Activated CD4-positive, alpha-beta T cell treated with anti-CD3 and anti-CD28 coated beads, Interleukin-2, amount 10 ng/mL, durations not matched to agents 24 days and 14 days (primary cell): ENCODE measurements at regions of chr7 and their contacts with region 1.

Region 1: GRCh38 chr7:134737566-134738345 is 41.7 kb upstream of the CALD1 start:
- DNase-seq: peak; percentile 76
- H3K4me3 Mint-ChIP-seq: peak overlapping the region; percentile 26
- H3K27ac Mint-ChIP-seq: peak overlapping the region; percentile 83
- H3K4me1 Mint-ChIP-seq: peaks cover 28% of the 10 kb centered on the region
- H3K27me3 Mint-ChIP-seq: no peaks in the 10 kb centered on the region

Region 2: GRCh38 chr7:134444198-134444871 is 293.4 kb before region 1 on chr7:
- intact Hi-C with region 1: no loop called
- DNase-seq: no peak
- H3K4me3 Mint-ChIP-seq: no peak overlapping the region
- H3K27ac Mint-ChIP-seq: no peak overlapping the region
- H3K4me1 Mint-ChIP-seq: no peaks in the 10 kb centered on the region
- H3K27me3 Mint-ChIP-seq: no peaks in the 10 kb centered on the region

Region 3: GRCh38 chr7:134458806-134459698 is 278.7 kb before region 1 on chr7 and contains the start of gene AKR1B1:
- intact Hi-C with region 1: loop called (anchors 10 kb)
- DNase-seq: peak; percentile 97
- H3K4me3 Mint-ChIP-seq: peak within 1 kb of the TSS; percentile 90
- H3K27ac Mint-ChIP-seq: peak within 1 kb of the TSS; percentile 83
- H3K4me1 Mint-ChIP-seq: peaks cover 39% of the 10 kb centered on the region
- H3K27me3 Mint-ChIP-seq: no peaks in the 10 kb centered on the region
- total RNA-seq, gene AKR1B1: 107 TPM in 2 replicates

Region 4: DNA sequence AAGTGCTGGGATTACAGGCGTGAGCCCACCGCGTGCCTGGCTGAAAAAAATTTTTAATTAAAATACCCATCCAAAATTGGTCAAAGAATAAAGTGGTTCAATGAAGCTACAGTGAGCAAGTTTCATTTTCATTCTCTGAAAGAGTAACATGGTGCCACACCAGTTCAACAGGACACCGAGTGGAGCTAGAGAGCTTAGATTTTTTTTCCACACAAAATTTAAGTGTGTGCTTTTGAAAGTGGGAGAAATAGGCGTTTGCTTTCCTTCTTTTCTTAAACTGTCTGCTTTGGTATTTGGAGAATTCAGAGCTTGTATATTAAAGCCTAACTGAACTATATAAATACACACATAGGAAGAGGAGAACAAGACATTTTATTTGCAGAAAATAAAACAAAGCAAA is 47.7 kb before region 1 on chr7:
- intact Hi-C with region 1: loop called (anchors 5 kb)
- DNase-seq: peak; percentile 62
- H3K4me3 Mint-ChIP-seq: no peak overlapping the region
- H3K27ac Mint-ChIP-seq: no peak overlapping the region
- H3K4me1 Mint-ChIP-seq: peaks cover 11% of the 10 kb centered on the region
- H3K27me3 Mint-ChIP-seq: no peaks in the 10 kb centered on the region

Region 5: DNA sequence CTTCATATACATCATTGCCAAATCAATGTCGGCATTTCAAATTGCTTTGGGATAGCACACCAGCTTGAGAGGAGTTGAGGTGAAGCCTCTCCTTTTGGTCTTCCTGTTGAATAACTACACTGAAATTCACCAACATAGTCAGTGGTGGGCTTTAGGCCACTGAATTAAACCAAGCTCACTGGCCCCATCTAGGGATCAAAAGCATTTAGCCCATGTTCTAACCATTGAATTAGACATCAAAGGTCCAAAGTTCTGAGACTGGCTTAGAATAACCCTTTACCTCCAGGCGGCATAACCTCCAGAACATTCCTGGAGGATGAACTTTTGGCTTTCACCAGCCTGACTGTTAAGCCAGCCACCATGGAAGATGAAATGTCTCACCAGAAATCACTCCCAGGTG is 36.5 kb before region 1 on chr7:
- intact Hi-C with region 1: no loop called
- DNase-seq: peak; percentile 63
- H3K4me3 Mint-ChIP-seq: no peak overlapping the region
- H3K27ac Mint-ChIP-seq: no peak overlapping the region
- H3K4me1 Mint-ChIP-seq: no peaks in the 10 kb centered on the region
- H3K27me3 Mint-ChIP-seq: no peaks in the 10 kb centered on the region

Region 6: GRCh38 chr7:134724606-134725005 is 13.2 kb before region 1 on chr7:
- intact Hi-C with region 1: no loop called
- DNase-seq: peak; percentile 59
- H3K4me3 Mint-ChIP-seq: no peak overlapping the region
- H3K27ac Mint-ChIP-seq: no peak overlapping the region
- H3K4me1 Mint-ChIP-seq: peaks cover 2% of the 10 kb centered on the region
- H3K27me3 Mint-ChIP-seq: no peaks in the 10 kb centered on the region

Region 7: GRCh38 chr7:134750083-134751062 is 12.6 kb after region 1 on chr7:
- intact Hi-C with region 1: loop called (anchors 1 kb)
- DNase-seq: peak; percentile 85
- H3K4me3 Mint-ChIP-seq: no peak overlapping the region
- H3K27ac Mint-ChIP-seq: peak overlapping the region; percentile 74
- H3K4me1 Mint-ChIP-seq: peaks cover 8% of the 10 kb centered on the region
- H3K27me3 Mint-ChIP-seq: peaks cover 1% of the 10 kb centered on the region

Region 8: GRCh38 chr7:134920026-134920753 is 182.4 kb after region 1 on chr7:
- intact Hi-C with region 1: loop called (anchors 10 kb)
- DNase-seq: no peak
- H3K4me3 Mint-ChIP-seq: peak overlapping the region; percentile 16
- H3K27ac Mint-ChIP-seq: peak overlapping the region; percentile 34
- H3K4me1 Mint-ChIP-seq: peaks cover 13% of the 10 kb centered on the region
- H3K27me3 Mint-ChIP-seq: no peaks in the 10 kb centered on the region